ENCODE measurements at regions of chr11 and their contacts with region 1.

Region 1: GRCh38 chr11:95067039-95067840 is 521 bp downstream of the SRSF8 start:
- DNase-seq: peak; percentile 45 to 88 (median 71)
- ATAC-seq: peak; percentile 61
- H3K4me3 ChIP-seq: peak overlapping the region; percentile 85 to 94
- H3K4me3 Mint-ChIP-seq: peak overlapping the region; percentile 96
- H3K27ac ChIP-seq: peak overlapping the region; percentile 90 to 92
- H3K27ac Mint-ChIP-seq: peak overlapping the region; percentile 97
- H3K4me1 ChIP-seq: peaks cover 23% of the 10 kb centered on the region
- H3K4me1 Mint-ChIP-seq: peaks cover 33% of the 10 kb centered on the region
- H3K27me3 ChIP-seq: no peaks in the 10 kb centered on the region
- H3K27me3 Mint-ChIP-seq: no peaks in the 10 kb centered on the region
- CTCF ChIP-seq: peak; percentile 46

Region 2: GRCh38 chr11:93209466-93209865 is 1857.8 kb before region 1 on chr11:
- CTCF ChIA-PET with region 1: no interaction called
- POLR2A ChIA-PET with region 1: no interaction called
- intact Hi-C with region 1: loop called in 1 of 2 experiments (anchors 10 kb)
- DNase-seq: no peak
- ATAC-seq: no peak
- H3K4me3 ChIP-seq: no peak overlapping the region
- H3K4me3 Mint-ChIP-seq: no peak overlapping the region
- H3K27ac ChIP-seq: no peak overlapping the region
- H3K27ac Mint-ChIP-seq: no peak overlapping the region
- H3K4me1 ChIP-seq: no peaks in the 10 kb centered on the region
- H3K4me1 Mint-ChIP-seq: no peaks in the 10 kb centered on the region
- H3K27me3 ChIP-seq: no peaks in the 10 kb centered on the region
- H3K27me3 Mint-ChIP-seq: peaks cover 11% of the 10 kb centered on the region
- CTCF ChIP-seq: no peak

Region 3: GRCh38 chr11:94493281-94494125 is 573.7 kb before region 1 on chr11 and contains the starts of genes ANKRD49 and MRE11:
- CTCF ChIA-PET with region 1: no interaction called
- POLR2A ChIA-PET with region 1: no interaction called
- intact Hi-C with region 1: loop called (anchors 5 kb)
- DNase-seq: peak; percentile 91 to 99 (median 96)
- ATAC-seq: peak; percentile 99
- H3K4me3 ChIP-seq: peak within 1 kb of the TSS; percentile 57 to 97
- H3K4me3 Mint-ChIP-seq: peak within 1 kb of the TSS; percentile 95
- H3K27ac ChIP-seq: peak within 1 kb of the TSS; percentile 72 to 94
- H3K27ac Mint-ChIP-seq: peak within 1 kb of the TSS; percentile 99
- H3K4me1 ChIP-seq: peaks cover 33% of the 10 kb centered on the region
- H3K4me1 Mint-ChIP-seq: peaks cover 50% of the 10 kb centered on the region
- H3K27me3 ChIP-seq: no peaks in the 10 kb centered on the region
- H3K27me3 Mint-ChIP-seq: no peaks in the 10 kb centered on the region
- CTCF ChIP-seq: no peak
- total RNA-seq, gene ANKRD49: 45.6 to 50.9 TPM
- total RNA-seq, gene MRE11: 12.3 to 14.7 TPM

Region 4: GRCh38 chr11:94776351-94777321 is 290.6 kb before region 1 on chr11:
- CTCF ChIA-PET with region 1: no interaction called
- POLR2A ChIA-PET with region 1: no interaction called
- intact Hi-C with region 1: no loop called
- DNase-seq: no peak
- ATAC-seq: no peak
- H3K4me3 ChIP-seq: no peak overlapping the region
- H3K4me3 Mint-ChIP-seq: no peak overlapping the region
- H3K27ac ChIP-seq: no peak overlapping the region
- H3K27ac Mint-ChIP-seq: no peak overlapping the region
- H3K4me1 ChIP-seq: no peaks in the 10 kb centered on the region
- H3K4me1 Mint-ChIP-seq: peaks cover 8% of the 10 kb centered on the region
- H3K27me3 ChIP-seq: no peaks in the 10 kb centered on the region
- H3K27me3 Mint-ChIP-seq: peaks cover 21% of the 10 kb centered on the region
- CTCF ChIP-seq: no peak

Region 5: GRCh38 chr11:95089620-95090542 is 22.6 kb after region 1 on chr11 and contains the start of gene ENDOD1:
- CTCF ChIA-PET with region 1: interaction called, 78 read pairs
- POLR2A ChIA-PET with region 1: interaction called, 200 read pairs
- intact Hi-C with region 1: loop called (anchors 1 kb)
- DNase-seq: peak; percentile 75 to 92 (median 83)
- ATAC-seq: peak; percentile 94
- H3K4me3 ChIP-seq: peak within 1 kb of the TSS; percentile 66 to 78
- H3K4me3 Mint-ChIP-seq: peak within 1 kb of the TSS; percentile 93
- H3K27ac ChIP-seq: peak within 1 kb of the TSS; percentile 77 to 84
- H3K27ac Mint-ChIP-seq: peak within 1 kb of the TSS; percentile 99
- H3K4me1 ChIP-seq: peaks cover 25% of the 10 kb centered on the region
- H3K4me1 Mint-ChIP-seq: peaks cover 50% of the 10 kb centered on the region
- H3K27me3 ChIP-seq: no peaks in the 10 kb centered on the region
- H3K27me3 Mint-ChIP-seq: no peaks in the 10 kb centered on the region
- CTCF ChIP-seq: no peak
- total RNA-seq, gene ENDOD1: 5.6 to 5.9 TPM

Region 6: GRCh38 chr11:95150946-95151684 is 83.9 kb after region 1 on chr11:
- CTCF ChIA-PET with region 1: interaction called, 34 read pairs
- POLR2A ChIA-PET with region 1: interaction called, 22 read pairs
- intact Hi-C with region 1: loop called (anchors 1 kb)
- DNase-seq: peak; percentile 83 to 96 (median 91)
- ATAC-seq: peak; percentile 94
- H3K4me3 ChIP-seq: peak overlapping the region; percentile 64 to 82
- H3K4me3 Mint-ChIP-seq: peak overlapping the region; percentile 85
- H3K27ac ChIP-seq: peak overlapping the region; percentile 66 to 69
- H3K27ac Mint-ChIP-seq: peak overlapping the region; percentile 91
- H3K4me1 ChIP-seq: peaks cover 24% of the 10 kb centered on the region
- H3K4me1 Mint-ChIP-seq: peaks cover 35% of the 10 kb centered on the region
- H3K27me3 ChIP-seq: no peaks in the 10 kb centered on the region
- H3K27me3 Mint-ChIP-seq: peaks cover 4% of the 10 kb centered on the region
- CTCF ChIP-seq: peak; percentile 92

Region 7: GRCh38 chr11:95790123-95790932 is 723.1 kb after region 1 on chr11 and contains the start of gene CEP57:
- CTCF ChIA-PET with region 1: interaction called, 4 read pairs
- POLR2A ChIA-PET with region 1: interaction called, 58 read pairs
- intact Hi-C with region 1: loop called (anchors 1 to 5 kb)
- DNase-seq: peak; percentile 80 to 98 (median 94)
- ATAC-seq: peak; percentile 54
- H3K4me3 ChIP-seq: peak within 1 kb of the TSS; percentile 86 to 93
- H3K4me3 Mint-ChIP-seq: peak within 1 kb of the TSS; percentile 99
- H3K27ac ChIP-seq: peak within 1 kb of the TSS; percentile 99 to 100
- H3K27ac Mint-ChIP-seq: peak within 1 kb of the TSS; percentile 100
- H3K4me1 ChIP-seq: peaks cover 29% of the 10 kb centered on the region
- H3K4me1 Mint-ChIP-seq: peaks cover 63% of the 10 kb centered on the region
- H3K27me3 ChIP-seq: no peaks in the 10 kb centered on the region
- H3K27me3 Mint-ChIP-seq: no peaks in the 10 kb centered on the region
- CTCF ChIP-seq: no peak
- total RNA-seq, gene CEP57: 53.2 to 53.7 TPM